ENCODE measurements at regions of chr7 and their contacts with region 1.

Region 1: DNA sequence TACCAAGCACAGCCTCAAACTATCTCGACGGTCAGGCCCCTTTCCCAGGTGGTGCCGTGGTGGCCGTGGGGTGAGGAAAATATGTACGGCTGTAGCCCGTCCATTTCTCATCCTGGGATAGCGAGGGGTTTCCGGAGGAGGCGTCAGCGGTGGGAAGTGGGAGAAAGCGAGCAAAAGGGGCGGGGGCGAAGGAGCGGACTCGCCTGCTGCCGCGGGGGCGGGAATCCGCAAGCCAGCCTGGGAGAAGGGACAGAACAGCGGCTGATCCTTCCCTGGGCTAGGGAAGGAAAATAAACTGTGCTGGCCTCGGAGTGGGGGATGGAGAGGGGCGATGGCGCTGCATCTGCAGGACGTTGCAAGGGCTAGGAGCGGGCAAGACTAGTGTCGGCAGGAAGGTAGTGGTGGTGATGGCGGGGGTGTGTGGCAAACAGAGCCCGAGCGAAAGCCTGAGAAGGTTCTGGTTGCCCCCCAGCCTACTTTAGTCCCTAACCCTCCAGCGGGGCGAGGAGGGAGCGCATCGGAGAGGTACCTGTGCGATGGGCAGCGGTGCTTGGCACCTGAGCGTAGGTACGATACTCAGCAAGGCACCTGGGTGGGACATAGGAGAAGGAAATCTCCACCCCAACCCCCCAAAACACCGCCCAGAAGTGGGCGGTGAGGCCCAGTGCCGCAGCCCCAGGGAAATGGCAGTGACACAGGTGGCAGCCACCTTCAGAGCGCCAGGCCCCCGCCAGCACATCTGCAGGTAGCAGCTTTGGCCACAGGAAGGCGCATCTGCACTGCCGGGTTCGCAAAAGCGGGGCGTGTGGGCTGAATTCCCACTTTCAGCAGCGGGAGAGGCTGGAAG is 49.9 kb upstream of the STEAP1B start:
- DNase-seq: peak; percentile 52
- H3K27ac ChIP-seq: no peak overlapping the region
- CTCF ChIP-seq: peak; percentile 92

Region 2: DNA sequence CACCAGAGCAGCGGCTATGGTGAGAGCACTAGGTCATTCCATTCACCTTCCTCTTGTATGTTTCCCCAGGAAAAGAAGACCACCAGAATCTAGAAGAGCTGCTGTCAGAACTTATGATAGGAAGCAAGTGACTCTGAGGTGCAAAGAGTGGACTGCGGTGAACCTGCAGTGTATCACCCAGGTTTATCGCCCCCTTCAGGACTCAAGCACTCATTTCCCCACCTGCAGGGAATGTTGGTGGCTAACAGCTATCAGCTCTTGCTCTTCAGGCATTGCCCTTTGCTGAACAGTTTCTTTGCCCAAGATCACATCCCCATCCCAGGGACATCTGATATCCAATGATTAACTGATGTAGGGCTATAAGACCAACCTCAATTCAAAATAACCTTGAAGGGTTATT is 110.8 kb after region 1 on chr7:
- CTCF ChIA-PET with region 1: no interaction called
- POLR2A ChIA-PET with region 1: no interaction called
- DNase-seq: no peak
- H3K27ac ChIP-seq: no peak overlapping the region
- CTCF ChIP-seq: no peak

Region 3: DNA sequence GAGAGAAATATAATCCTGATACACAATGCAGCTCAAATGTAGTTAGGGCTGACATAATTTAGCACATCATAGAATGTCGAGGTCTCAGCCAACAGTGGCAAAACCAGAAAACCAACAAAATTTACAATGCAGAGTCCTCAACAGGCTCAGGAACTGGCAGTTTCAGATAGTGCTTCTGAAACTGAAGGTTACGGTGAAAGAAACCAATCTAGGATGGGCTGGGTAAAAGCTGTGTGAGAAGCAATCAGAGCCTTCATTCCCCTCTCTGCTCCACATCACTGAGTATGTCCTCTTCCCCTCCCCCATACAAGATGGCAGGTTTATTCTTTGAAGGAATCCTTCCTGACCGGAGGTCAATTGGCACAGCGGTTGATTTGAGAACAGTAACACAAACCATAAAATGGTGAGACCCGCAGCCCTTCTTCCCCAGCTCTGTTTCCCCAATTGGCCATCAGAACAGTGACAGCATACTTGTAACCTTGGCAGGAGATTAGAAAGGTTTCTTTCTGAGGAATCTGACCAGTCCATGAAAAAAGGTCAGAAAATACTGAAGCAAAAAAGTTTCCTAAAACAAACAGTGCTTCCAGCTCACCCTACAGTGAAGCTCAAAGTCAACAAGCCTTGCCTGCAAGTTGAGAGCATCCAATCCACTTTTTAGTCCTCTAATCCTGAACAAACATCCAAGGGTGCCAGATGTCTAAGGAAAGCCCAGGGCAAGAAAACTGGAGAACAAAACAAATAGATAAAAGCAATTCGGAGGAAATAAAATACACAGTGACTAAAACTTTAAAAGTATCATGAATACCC is 123.2 kb after region 1 on chr7:
- CTCF ChIA-PET with region 1: no interaction called
- POLR2A ChIA-PET with region 1: no interaction called
- DNase-seq: peak; percentile 45
- H3K27ac ChIP-seq: no peak overlapping the region
- CTCF ChIP-seq: no peak

Region 4: DNA sequence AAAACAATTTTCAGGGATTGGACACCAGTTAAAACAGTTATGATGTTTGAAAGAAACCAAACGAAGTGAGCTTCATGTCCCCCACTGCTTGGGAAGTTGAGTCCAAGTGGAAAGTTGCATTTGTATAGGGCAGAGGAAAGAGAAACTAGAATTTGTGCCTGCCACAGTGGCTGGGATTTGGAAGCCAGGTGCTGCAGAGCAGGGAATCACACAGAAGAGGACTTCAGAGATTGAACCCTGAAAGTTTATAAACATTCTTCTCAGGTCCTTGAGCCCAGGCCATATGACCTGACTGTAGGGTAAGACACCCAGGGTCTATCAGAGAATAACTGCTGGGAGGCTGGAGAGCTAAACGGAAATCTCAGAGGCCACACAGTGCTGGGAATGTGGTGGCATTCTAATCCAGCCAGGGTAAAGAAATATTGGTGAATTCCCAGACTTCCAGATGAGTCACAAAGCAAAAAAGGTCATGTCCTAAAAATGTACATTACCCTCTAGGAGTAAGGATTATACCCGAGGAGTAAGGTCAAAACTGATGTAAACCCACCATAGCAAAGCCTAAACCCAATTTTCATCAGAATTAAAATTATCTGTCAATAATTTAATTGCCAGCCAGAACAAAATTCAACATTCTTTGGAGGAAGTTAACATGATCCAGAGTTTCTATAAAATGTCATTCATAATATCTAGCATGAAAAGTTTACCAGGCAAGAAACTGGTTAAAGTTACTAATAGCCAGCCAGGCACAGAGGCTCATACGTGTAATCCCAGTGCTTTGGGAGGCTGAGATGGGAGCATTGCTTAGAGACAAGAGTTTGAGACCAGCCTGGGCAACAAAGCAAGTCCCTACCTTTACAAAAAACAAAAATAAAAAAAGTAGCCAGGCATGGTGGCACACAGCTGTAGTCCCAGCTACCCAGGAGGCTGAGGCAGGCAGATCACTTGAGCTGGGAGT is 241.6 kb after region 1 on chr7:
- CTCF ChIA-PET with region 1: interaction called, 10 read pairs
- POLR2A ChIA-PET with region 1: no interaction called
- DNase-seq: peak; percentile 17
- H3K27ac ChIP-seq: no peak overlapping the region
- CTCF ChIP-seq: no peak

Measured in RWPE1 (cell line).